Naive thymus-derived CD4-positive, alpha-beta T cell (primary cell): ENCODE measurements at regions of chr19 and their contacts with region 1.

Region 1: DNA sequence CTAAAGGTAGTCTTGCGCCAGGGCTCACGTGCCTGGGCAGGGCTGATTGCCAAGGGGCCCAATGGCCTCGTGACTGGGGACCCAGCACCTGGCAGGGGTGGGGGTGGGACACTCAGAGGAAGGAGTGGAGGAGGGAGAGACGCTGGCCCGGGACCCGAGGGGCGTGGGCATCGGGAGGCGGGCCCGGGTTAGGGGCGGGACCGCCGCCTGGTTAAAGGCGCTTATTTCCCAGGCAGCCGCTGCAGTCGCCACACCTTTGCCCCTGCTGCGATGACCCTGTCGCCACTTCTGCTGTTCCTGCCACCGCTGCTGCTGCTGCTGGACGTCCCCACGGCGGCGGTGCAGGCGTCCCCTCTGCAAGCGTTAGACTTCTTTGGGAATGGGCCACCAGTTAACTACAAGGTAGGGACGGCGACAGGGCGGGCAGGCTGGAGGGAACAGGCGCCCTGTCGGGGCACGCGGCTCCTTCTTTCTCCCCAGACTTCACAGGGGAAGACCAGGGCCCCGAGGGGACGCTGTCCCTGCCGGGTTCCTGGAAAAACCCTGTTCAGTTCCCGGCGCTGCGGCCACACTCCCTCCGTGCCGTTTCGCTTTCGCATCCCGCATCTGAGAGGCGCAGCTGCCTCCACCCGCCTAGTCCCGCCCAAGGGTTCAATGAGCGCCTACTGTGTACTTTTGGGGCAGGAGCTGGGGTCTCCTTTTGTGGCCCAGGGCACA is at the start of gene IFI30:
- DNase-seq: peak in 8 of 9 donors; percentile 41 to 76 (median 52)
- ATAC-seq: peak; percentile 79
- H3K4me3 ChIP-seq: peak within 1 kb of the TSS; percentile 78
- H3K4me3 Mint-ChIP-seq: peak within 1 kb of the TSS; percentile 84 to 94 (median 90)
- H3K27ac ChIP-seq: peak within 1 kb of the TSS; percentile 67
- H3K27ac Mint-ChIP-seq: peak within 1 kb of the TSS; percentile 62 to 89 (median 79)
- H3K4me1 ChIP-seq: peaks cover 5 to 13% of the 10 kb centered on the region in 2 donors
- H3K4me1 Mint-ChIP-seq: peaks cover 0 to 29% (median 10%) of the 10 kb centered on the region in 7 donors
- H3K27me3 ChIP-seq: no peaks in the 10 kb centered on the region
- H3K27me3 Mint-ChIP-seq: no peaks in the 10 kb centered on the region
- total RNA-seq, gene IFI30: 51.3 to 514 (median 59.5) TPM

Region 2: DNA sequence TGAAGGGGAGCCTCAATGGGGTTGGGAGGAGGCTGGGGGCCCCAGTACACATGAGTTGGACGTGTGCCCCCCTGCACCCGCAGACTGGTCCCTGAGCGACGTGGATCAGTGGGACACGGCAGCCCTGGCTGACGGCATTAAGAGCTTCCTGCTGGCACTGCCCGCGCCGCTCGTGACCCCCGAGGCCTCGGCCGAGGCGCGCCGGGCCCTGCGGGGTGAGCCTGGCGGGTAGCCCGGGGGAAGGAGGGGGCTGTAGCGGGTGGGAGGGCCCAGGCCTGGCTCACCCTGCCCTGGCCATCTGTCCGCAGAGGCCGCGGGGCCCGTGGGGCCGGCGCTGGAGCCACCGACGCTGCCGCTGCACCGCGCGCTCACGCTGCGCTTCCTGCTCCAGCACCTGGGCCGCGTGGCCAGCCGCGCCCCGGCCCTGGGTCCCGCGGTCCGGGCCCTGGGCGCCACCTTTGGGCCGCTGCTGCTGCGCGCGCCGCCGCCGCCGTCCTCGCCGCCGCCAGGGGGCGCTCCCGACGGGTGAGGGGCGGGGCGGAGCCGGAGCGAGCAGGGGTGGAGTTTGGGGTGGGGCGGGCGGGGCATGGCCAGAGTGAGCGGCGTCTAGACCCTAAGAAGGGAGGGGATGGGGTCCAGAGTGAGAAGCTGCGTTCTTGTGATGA is 12.6 kb before region 1 on chr19:
- CTCF ChIA-PET with region 1: interaction called, 3 read pairs
- POLR2A ChIA-PET with region 1: no interaction called
- intact Hi-C with region 1: loop called in 1 of 2 experiments (anchors 1 kb)
- DNase-seq: peak; percentile 64 to 96 (median 80)
- ATAC-seq: peak; percentile 100
- H3K4me3 ChIP-seq: no peak overlapping the region
- H3K4me3 Mint-ChIP-seq: peak overlapping the region in 8 of 10 donors; percentile 39 to 71 (median 56)
- H3K27ac ChIP-seq: peak overlapping the region; percentile 62
- H3K27ac Mint-ChIP-seq: peak overlapping the region in 4 of 9 donors; percentile 20 to 72 (median 45)
- H3K4me1 ChIP-seq: peaks cover 0 to 13% of the 10 kb centered on the region in 2 donors
- H3K4me1 Mint-ChIP-seq: peaks cover 0 to 18% (median 12%) of the 10 kb centered on the region in 7 donors
- H3K27me3 ChIP-seq: no peaks in the 10 kb centered on the region
- H3K27me3 Mint-ChIP-seq: no peaks in the 10 kb centered on the region